MCF 10A (cell line): ENCODE measurements at regions of chr11 and their contacts with region 1.

Region 1: GRCh38 chr11:101759771-101760450 is 154.9 kb upstream of the CEP126 start:
- DNase-seq: peak; percentile 49
- H3K4me3 Mint-ChIP-seq: no peak overlapping the region
- H3K27ac Mint-ChIP-seq: peak overlapping the region; percentile 39
- H3K4me1 Mint-ChIP-seq: peaks cover 15% of the 10 kb centered on the region
- H3K27me3 Mint-ChIP-seq: no peaks in the 10 kb centered on the region
- CTCF ChIP-seq: peak; percentile 10

Region 2: GRCh38 chr11:101718402-101718801 is 41.5 kb before region 1 on chr11:
- CTCF ChIA-PET with region 1: no interaction called
- POLR2A ChIA-PET with region 1: no interaction called
- intact Hi-C with region 1: loop called (anchors 1 kb)
- DNase-seq: peak; percentile 75
- H3K4me3 Mint-ChIP-seq: no peak overlapping the region
- H3K27ac Mint-ChIP-seq: peak overlapping the region; percentile 82
- H3K4me1 Mint-ChIP-seq: peaks cover 39% of the 10 kb centered on the region
- H3K27me3 Mint-ChIP-seq: no peaks in the 10 kb centered on the region
- CTCF ChIP-seq: no peak

Region 3: GRCh38 chr11:101748572-101749344 is 11.2 kb before region 1 on chr11:
- CTCF ChIA-PET with region 1: interaction called, 10 read pairs
- POLR2A ChIA-PET with region 1: interaction called, 11 read pairs
- intact Hi-C with region 1: no loop called
- DNase-seq: no peak
- H3K4me3 Mint-ChIP-seq: no peak overlapping the region
- H3K27ac Mint-ChIP-seq: peak overlapping the region; percentile 77
- H3K4me1 Mint-ChIP-seq: peaks cover 13% of the 10 kb centered on the region
- H3K27me3 Mint-ChIP-seq: no peaks in the 10 kb centered on the region
- CTCF ChIP-seq: no peak